PC-9 (cell line): ENCODE measurements at regions of chr19 and their contacts with region 1.

Region 1: GRCh38 chr19:35716801-35717666 is 769 bp upstream of the KMT2B start:
- DNase-seq: peak; percentile 83 to 89
- H3K4me3 ChIP-seq: peak overlapping the region; percentile 85
- H3K27ac ChIP-seq: peak overlapping the region; percentile 45
- H3K4me1 ChIP-seq: peaks cover 20% of the 10 kb centered on the region
- H3K27me3 ChIP-seq: no peaks in the 10 kb centered on the region
- CTCF ChIP-seq: peak; percentile 91

Region 2: DNA sequence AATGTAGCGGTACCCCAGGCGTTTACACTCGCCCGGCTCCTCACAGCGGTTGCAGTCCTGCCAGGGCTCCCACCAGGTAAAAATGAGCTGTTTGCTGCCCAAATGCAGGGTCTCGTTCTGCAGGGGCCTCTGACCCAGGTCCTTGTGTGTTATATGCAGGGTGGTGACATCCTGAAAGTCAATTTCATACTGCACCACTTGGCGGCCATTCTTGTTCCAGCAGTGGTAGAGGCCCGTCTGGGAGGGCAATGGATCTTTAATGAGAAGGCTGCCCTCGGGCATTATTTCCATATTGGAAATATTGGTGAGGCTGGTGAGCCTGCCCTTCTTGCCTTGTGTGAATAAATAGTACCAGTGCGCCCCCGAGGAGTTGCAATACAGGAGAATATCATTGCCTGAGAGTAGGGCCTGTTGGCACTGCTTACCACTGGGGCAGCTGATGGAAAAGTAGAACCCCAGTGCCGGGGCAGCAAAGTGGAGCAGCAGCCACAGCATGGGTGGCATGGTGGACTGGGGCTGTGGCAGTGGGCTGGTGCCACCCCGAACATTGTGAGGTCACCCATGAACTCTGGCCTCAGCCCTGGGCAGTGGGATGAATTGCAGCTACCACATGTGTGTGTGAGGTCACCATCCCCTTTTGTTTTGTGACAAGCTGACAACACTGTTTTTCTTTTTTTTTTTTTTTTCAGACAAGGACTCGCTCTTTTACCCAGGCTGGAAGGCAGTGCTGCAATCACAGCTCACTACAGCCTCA is 488.7 kb before region 1 on chr19 and contains the start of gene FAM187B:
- CTCF ChIA-PET with region 1: no interaction called
- POLR2A ChIA-PET with region 1: no interaction called
- intact Hi-C with region 1: no loop called
- DNase-seq: no peak
- H3K4me3 ChIP-seq: no peak within 1 kb of the TSS
- H3K27ac ChIP-seq: no peak within 1 kb of the TSS
- H3K4me1 ChIP-seq: no peaks in the 10 kb centered on the region
- H3K27me3 ChIP-seq: no peaks in the 10 kb centered on the region
- CTCF ChIP-seq: no peak
- total RNA-seq, gene FAM187B: not detected in 2 replicates

Region 3: GRCh38 chr19:35247526-35248306 is 469.3 kb before region 1 on chr19:
- CTCF ChIA-PET with region 1: no interaction called
- POLR2A ChIA-PET with region 1: no interaction called
- intact Hi-C with region 1: loop called (anchors 1 kb)
- DNase-seq: peak; percentile 91 to 96
- H3K4me3 ChIP-seq: peak overlapping the region; percentile 89
- H3K27ac ChIP-seq: peak overlapping the region; percentile 95
- H3K4me1 ChIP-seq: peaks cover 27% of the 10 kb centered on the region
- H3K27me3 ChIP-seq: no peaks in the 10 kb centered on the region
- CTCF ChIP-seq: peak; percentile 59

Region 4: DNA sequence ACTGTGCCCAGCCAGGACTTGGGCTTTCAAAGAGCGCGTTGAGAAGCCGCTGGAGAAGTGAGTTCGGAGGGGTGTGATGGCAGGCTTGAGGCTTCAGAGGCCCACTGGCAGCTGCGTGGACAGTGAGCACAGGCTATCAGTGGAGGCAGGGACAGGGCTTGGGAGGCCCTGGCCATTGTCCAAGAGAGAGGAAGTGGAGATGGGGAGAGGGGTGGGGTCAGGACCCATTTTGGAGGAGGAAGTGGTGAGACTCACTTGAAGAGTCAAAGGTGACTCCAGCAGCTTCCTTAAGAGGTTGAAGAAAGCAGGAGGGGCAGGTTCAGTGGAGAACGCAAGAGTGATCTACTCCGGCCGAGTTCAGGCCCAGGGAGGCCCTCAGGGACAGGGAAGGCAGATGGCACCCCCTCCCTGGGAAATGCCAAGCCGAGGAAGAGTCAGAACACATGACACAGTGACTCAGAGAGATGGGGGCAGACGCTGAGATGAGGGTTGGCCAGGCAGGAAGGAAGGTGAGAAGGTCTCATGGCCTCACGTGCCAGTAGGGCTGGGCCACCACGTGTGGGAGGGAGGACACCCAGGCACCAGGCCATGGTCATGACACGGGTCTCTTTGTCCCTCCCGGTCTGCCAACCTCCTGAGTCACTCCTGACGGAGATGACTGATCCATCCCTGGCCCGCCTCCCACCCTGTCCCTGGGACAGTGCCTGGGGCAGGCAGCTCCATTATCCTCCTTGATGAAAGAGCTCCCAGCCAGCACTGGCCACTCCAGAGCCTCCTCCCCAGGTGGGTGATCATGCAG is 398.2 kb before region 1 on chr19:
- CTCF ChIA-PET with region 1: no interaction called
- POLR2A ChIA-PET with region 1: no interaction called
- intact Hi-C with region 1: loop called (anchors 5 kb)
- DNase-seq: peak; percentile 98 to 99
- H3K4me3 ChIP-seq: peak overlapping the region; percentile 11; the same call in 1 of the 2 replicates
- H3K27ac ChIP-seq: peak overlapping the region; percentile 98
- H3K4me1 ChIP-seq: peaks cover 63% of the 10 kb centered on the region
- H3K27me3 ChIP-seq: no peaks in the 10 kb centered on the region
- CTCF ChIP-seq: no peak

Region 5: GRCh38 chr19:35509861-35510625 is 207.0 kb before region 1 on chr19:
- CTCF ChIA-PET with region 1: no interaction called
- POLR2A ChIA-PET with region 1: no interaction called
- intact Hi-C with region 1: loop called (anchors 1 kb)
- DNase-seq: peak; percentile 81 to 95
- H3K4me3 ChIP-seq: peak overlapping the region; percentile 77
- H3K27ac ChIP-seq: peak overlapping the region; percentile 90
- H3K4me1 ChIP-seq: peaks cover 24% of the 10 kb centered on the region
- H3K27me3 ChIP-seq: no peaks in the 10 kb centered on the region
- CTCF ChIP-seq: peak; percentile 97

Region 6: DNA sequence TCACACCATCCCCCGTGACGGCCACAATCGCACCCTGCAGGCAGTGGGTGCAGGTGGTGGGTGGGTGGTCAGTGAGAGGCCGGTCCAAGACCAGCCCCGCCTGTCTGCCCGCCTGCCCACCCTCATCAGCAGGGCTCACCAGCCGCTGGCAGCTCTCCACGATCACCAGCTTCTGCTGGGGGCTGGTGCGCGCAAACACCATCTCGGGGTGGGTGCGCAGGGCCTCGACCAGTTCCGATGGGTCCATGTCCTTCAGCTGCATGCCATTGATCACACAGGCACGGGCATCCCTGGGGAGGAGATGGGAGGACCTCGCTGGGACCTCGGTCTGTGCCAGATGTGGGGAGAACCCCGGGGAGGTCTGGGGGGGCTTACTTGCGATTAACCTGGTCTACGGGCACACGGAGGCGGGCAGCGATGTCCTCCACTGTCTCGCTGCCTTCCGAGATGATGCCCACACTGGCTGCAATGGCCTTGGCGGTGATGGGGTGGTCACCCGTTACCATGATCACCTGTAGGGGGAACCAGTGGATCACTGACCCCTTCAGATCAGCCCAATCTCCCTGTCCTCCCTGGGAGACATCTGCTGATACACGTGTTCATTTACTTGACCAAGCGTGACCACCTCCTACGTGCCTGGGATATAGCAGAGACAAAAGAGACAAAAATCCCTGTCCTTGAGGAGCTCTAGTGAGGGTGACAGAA is 161.6 kb before region 1 on chr19:
- CTCF ChIA-PET with region 1: no interaction called
- POLR2A ChIA-PET with region 1: no interaction called
- intact Hi-C with region 1: loop called (anchors 1 kb)
- DNase-seq: peak in 1 of 2 experiments; percentile 48
- H3K4me3 ChIP-seq: no peak overlapping the region
- H3K27ac ChIP-seq: no peak overlapping the region
- H3K4me1 ChIP-seq: no peaks in the 10 kb centered on the region
- H3K27me3 ChIP-seq: peaks cover 9% of the 10 kb centered on the region
- CTCF ChIP-seq: peak; percentile 63

Region 7: GRCh38 chr19:35693830-35694599 is 23.0 kb before region 1 on chr19:
- CTCF ChIA-PET with region 1: interaction called, 3 read pairs
- POLR2A ChIA-PET with region 1: no interaction called
- intact Hi-C with region 1: loop called (anchors 1 kb)
- DNase-seq: peak; percentile 69 to 84
- H3K4me3 ChIP-seq: no peak overlapping the region
- H3K27ac ChIP-seq: no peak overlapping the region
- H3K4me1 ChIP-seq: peaks cover 13% of the 10 kb centered on the region
- H3K27me3 ChIP-seq: no peaks in the 10 kb centered on the region
- CTCF ChIP-seq: peak; percentile 91

Region 8: GRCh38 chr19:35931161-35931873 is 214.3 kb after region 1 on chr19:
- CTCF ChIA-PET with region 1: no interaction called
- POLR2A ChIA-PET with region 1: no interaction called
- intact Hi-C with region 1: loop called (anchors 1 kb)
- DNase-seq: peak; percentile 96 to 99
- H3K4me3 ChIP-seq: peak overlapping the region; percentile 55
- H3K27ac ChIP-seq: no peak overlapping the region
- H3K4me1 ChIP-seq: peaks cover 16% of the 10 kb centered on the region
- H3K27me3 ChIP-seq: peaks cover 13% of the 10 kb centered on the region
- CTCF ChIP-seq: peak; percentile 80